ENCODE measurements at regions of chr5 and their contacts with region 1.

Region 1: GRCh38 chr5:96687812-96688453 is 25.8 kb downstream of the CAST start:
- DNase-seq: peak; percentile 81
- H3K4me3 ChIP-seq: peak overlapping the region in 1 of 3 experiments; percentile 49
- H3K27ac ChIP-seq: peak overlapping the region; percentile 27
- H3K4me1 ChIP-seq: peaks cover 9% of the 10 kb centered on the region
- H3K27me3 ChIP-seq: no peaks in the 10 kb centered on the region
- CTCF ChIP-seq: peak; percentile 42 to 48
- POLR2A ChIP-seq: no peak

Region 2: DNA sequence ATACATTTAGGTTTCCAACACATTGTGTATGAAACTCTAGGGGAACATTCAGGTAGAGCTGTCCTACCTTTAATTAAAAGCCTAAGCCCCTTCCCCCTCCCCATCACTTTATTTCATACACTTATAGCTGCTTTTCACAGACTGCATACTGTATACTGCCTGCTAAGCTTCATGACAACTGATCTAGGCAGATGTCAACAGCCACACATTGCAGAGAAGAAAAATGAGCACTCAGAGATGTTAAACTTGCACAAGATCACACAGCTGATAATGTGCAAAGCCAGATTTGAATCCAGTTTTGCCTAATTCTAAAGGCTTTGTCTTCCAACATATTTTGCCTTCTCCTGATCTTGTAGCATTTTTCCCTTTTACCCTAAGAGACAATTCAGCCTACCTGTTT is 82.8 kb before region 1 on chr5:
- CTCF ChIA-PET with region 1: no interaction called
- POLR2A ChIA-PET with region 1: no interaction called
- dilution Hi-C with region 1: no loop called
- intact Hi-C with region 1: no loop called
- DNase-seq: no peak
- H3K4me3 ChIP-seq: no peak overlapping the region
- H3K27ac ChIP-seq: no peak overlapping the region
- H3K4me1 ChIP-seq: peaks cover 24% of the 10 kb centered on the region
- H3K27me3 ChIP-seq: no peaks in the 10 kb centered on the region
- CTCF ChIP-seq: no peak
- POLR2A ChIP-seq: no peak

Region 3: DNA sequence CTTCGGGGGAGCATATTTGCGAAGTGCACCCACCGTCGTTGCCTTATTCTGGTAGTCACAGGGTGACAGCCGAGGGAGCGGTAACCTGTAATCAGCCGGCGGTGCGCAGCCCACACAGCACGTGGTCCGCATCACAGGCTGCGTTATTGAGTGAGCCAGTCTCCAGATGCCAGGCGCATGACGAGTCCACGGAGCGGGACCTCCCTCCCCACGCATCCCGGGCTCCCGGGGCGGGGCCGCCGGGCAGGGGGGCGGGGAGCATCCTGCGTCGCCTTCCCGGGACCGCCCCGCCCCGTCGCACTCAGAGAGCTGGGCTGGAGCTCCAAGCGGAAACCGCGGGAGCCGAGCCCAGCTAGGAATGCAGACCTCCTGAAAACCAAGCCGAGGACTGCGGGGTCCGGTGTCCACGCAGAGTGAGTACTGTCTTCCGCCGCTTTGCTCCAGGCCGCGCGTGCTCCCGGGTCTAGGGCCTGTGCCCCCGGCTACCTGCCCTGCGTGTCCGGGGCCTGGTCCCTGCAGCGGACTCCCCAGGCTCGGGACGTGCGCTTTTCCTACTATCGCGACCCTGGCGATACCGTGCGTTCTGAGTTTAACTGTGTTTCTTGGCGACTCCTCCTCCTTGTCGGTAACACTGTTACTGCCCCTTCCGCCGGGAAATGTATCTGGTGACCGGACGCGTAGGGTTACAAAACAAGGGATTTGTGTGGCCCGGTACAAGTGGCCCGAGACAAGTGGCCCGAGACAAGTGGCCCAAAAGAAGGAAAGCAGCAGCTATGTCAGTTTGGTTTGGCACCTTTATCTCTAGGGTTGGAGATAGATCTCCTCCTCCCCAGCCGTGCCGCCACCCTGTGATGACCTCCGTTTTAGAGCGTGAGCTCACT is 14.8 kb after region 1 on chr5:
- CTCF ChIA-PET with region 1: interaction called, 11 read pairs
- POLR2A ChIA-PET with region 1: no interaction called
- dilution Hi-C with region 1: no loop called
- intact Hi-C with region 1: no loop called
- DNase-seq: peak; percentile 90
- H3K4me3 ChIP-seq: peak overlapping the region; percentile 21 to 63 (median 52)
- H3K27ac ChIP-seq: peak overlapping the region; percentile 78
- H3K4me1 ChIP-seq: peaks cover 20% of the 10 kb centered on the region
- H3K27me3 ChIP-seq: no peaks in the 10 kb centered on the region
- CTCF ChIP-seq: no peak
- POLR2A ChIP-seq: peak; percentile 80

Region 4: DNA sequence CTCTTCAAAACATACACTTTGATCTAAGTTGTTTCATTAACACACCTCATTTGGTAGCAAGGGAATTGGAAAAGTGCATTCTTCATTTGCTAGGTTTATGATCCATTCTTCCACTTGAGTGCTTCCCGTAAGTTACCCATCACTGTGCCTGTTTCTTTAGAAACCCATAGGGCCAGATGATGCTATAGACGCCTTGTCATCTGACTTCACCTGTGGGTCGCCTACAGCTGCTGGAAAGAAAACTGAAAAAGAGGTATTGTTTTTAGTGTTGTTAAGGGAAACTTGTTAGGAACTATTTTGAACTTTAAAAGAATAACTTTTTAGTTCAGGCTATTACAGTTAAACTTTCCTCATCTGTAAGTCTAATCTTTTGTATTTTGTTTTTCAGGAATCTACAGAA is 53.2 kb after region 1 on chr5:
- CTCF ChIA-PET with region 1: no interaction called
- POLR2A ChIA-PET with region 1: no interaction called
- dilution Hi-C with region 1: no loop called
- intact Hi-C with region 1: no loop called
- DNase-seq: no peak
- H3K4me3 ChIP-seq: no peak overlapping the region
- H3K27ac ChIP-seq: no peak overlapping the region
- H3K4me1 ChIP-seq: peaks cover 24% of the 10 kb centered on the region
- H3K27me3 ChIP-seq: no peaks in the 10 kb centered on the region
- CTCF ChIP-seq: no peak
- POLR2A ChIP-seq: no peak

Region 5: GRCh38 chr5:97004423-97005060 is 316.6 kb after region 1 on chr5:
- CTCF ChIA-PET with region 1: no interaction called
- POLR2A ChIA-PET with region 1: no interaction called
- dilution Hi-C with region 1: no loop called
- intact Hi-C with region 1: no loop called
- DNase-seq: no peak
- H3K4me3 ChIP-seq: no peak overlapping the region
- H3K27ac ChIP-seq: no peak overlapping the region
- H3K4me1 ChIP-seq: peaks cover 6% of the 10 kb centered on the region
- H3K27me3 ChIP-seq: no peaks in the 10 kb centered on the region
- CTCF ChIP-seq: no peak
- POLR2A ChIP-seq: no peak